GM10248 (cell line): ENCODE measurements at regions of chr1 and their contacts with region 1.

Region 1: GRCh38 chr1:56709269-56709880 is 64.3 kb downstream of the PRKAA2 start:
- DNase-seq: peak; percentile 17
- CTCF ChIP-seq: peak; percentile 29

Region 2: GRCh38 chr1:55284852-55285251 is 1424.5 kb before region 1 on chr1:
- CTCF ChIA-PET with region 1: interaction called, 10 read pairs
- POLR2A ChIA-PET with region 1: no interaction called
- DNase-seq: no peak
- CTCF ChIP-seq: peak; percentile 60

Region 3: GRCh38 chr1:56696663-56697062 is 12.7 kb before region 1 on chr1:
- CTCF ChIA-PET with region 1: interaction called, 20 read pairs
- POLR2A ChIA-PET with region 1: no interaction called
- DNase-seq: no peak
- CTCF ChIP-seq: no peak